ENCODE measurements at regions of chr22 and their contacts with region 1.

Region 1: GRCh38 chr22:28800308-28801077 is at the start of gene XBP1:
- DNase-seq: peak; percentile 92 to 96
- H3K4me3 ChIP-seq: peak within 1 kb of the TSS; percentile 94
- H3K4me3 Mint-ChIP-seq: peak within 1 kb of the TSS; percentile 93
- H3K27ac Mint-ChIP-seq: peak within 1 kb of the TSS; percentile 99
- H3K4me1 ChIP-seq: peaks cover 17% of the 10 kb centered on the region
- H3K4me1 Mint-ChIP-seq: peaks cover 19% of the 10 kb centered on the region
- H3K27me3 ChIP-seq: no peaks in the 10 kb centered on the region
- H3K27me3 Mint-ChIP-seq: no peaks in the 10 kb centered on the region
- CTCF ChIP-seq: no peak
- total RNA-seq, gene XBP1: 215 and 225 TPM in 2 replicates

Region 2: DNA sequence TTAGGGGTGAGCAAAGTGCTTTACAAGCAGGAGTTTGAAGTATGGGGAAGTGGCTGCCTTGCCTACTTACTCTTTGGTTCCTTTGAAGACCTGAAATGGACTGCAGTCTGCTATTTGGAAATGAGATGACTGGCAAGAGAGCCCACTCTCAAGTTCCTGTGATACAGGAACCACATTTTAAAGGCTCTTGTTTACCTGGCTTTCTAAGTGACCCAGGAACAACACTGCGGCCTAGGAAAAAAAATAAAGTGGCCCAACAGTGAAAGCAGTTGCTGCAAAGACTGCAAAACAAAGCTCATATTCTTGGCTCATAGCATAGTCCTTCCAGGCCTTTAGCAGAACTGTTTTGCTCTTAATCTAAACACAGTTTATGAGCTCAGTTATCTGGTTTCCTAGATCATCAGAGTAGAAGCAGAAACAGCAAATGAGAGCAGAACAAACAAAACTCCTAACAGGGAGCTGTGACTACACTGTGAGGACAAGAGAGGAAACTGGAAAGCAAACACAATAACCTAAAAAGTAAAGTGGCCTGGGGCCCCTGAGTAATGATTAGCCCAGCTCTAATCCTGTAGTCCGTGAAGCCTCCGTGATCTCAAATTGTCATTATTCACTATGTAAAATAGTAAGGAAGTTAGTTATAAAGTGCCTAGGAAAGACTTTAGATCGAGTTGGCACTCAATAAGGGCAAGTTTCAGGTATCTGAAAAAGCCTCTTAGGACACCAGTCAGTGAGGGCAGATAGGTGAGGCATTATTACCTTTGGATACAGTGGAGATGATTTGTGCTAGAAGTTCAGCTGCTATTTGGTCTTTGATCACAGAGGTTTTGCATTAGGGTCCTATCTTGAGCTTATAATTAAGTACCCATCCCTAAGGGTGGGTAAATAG is 16.5 kb before region 1 on chr22:
- CTCF ChIA-PET with region 1: interaction called, 3 read pairs
- POLR2A ChIA-PET with region 1: interaction called, 43 read pairs
- intact Hi-C with region 1: loop called (anchors 1 kb)
- DNase-seq: peak; percentile 67 to 79
- H3K4me3 ChIP-seq: no peak overlapping the region
- H3K4me3 Mint-ChIP-seq: peak overlapping the region; percentile 45
- H3K27ac Mint-ChIP-seq: peak overlapping the region; percentile 76
- H3K4me1 ChIP-seq: peaks cover 28% of the 10 kb centered on the region
- H3K4me1 Mint-ChIP-seq: peaks cover 26% of the 10 kb centered on the region
- H3K27me3 ChIP-seq: no peaks in the 10 kb centered on the region
- H3K27me3 Mint-ChIP-seq: no peaks in the 10 kb centered on the region
- CTCF ChIP-seq: no peak

Region 3: GRCh38 chr22:28810821-28811491 is 10.5 kb after region 1 on chr22:
- CTCF ChIA-PET with region 1: interaction called, 7 read pairs
- POLR2A ChIA-PET with region 1: interaction called, 35 read pairs
- intact Hi-C with region 1: no loop called
- DNase-seq: peak in 1 of 2 experiments; percentile 30
- H3K4me3 ChIP-seq: no peak overlapping the region
- H3K4me3 Mint-ChIP-seq: no peak overlapping the region
- H3K27ac Mint-ChIP-seq: peak overlapping the region; percentile 12
- H3K4me1 ChIP-seq: peaks cover 78% of the 10 kb centered on the region
- H3K4me1 Mint-ChIP-seq: peaks cover 33% of the 10 kb centered on the region
- H3K27me3 ChIP-seq: no peaks in the 10 kb centered on the region
- H3K27me3 Mint-ChIP-seq: no peaks in the 10 kb centered on the region
- CTCF ChIP-seq: no peak

Region 4: DNA sequence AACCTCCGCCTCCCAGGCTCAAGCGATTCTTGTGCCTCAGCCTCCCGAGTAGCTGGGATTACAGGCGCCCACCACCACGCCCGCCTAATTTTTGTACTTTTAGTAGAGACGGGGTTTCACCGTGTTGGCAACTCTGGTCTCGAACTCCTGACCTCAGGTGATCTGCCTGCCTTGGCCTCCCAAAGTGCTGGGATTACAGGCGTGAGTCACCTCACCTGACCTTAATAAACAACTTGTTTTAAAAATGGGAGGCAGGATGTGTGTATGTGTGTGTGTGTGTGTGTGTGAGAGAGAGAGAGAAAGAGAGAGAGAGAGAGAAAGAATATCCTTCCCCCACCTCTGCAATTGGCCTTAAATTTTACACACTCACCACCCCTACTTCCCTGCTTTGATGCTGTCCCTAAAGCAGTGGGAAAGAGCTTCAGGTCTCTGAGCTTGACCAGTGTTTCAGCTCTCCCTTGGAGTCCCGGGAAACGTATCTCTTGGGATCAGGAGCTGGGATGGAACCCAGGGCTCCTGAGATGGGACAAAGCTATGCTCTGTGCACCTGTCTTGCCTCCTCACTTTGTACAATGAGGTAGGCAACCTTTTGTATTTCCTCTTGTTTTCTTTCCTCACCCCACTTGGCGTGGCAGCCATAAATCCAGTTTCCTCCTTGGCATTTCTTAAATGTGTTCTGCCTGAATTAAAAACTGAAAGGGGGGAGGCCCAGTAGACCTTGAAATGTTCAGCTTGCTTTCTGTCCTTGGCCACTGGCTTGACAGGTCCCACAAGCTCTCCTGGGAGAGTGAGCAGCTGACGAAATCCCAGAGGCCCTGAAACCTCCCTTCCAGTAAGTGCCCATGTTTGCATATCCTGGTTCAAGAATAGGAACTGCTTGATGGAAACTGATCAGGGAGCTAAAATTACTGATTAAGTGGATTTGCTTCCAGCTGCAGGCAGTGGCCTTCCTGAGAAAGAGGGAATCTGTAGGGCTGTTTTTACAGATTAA is 17.7 kb after region 1 on chr22:
- CTCF ChIA-PET with region 1: interaction called, 5 read pairs
- POLR2A ChIA-PET with region 1: interaction called, 42 read pairs
- intact Hi-C with region 1: loop called (anchors 1 kb)
- DNase-seq: peak; percentile 84 to 86
- H3K4me3 ChIP-seq: no peak overlapping the region
- H3K4me3 Mint-ChIP-seq: peak overlapping the region; percentile 59
- H3K27ac Mint-ChIP-seq: peak overlapping the region; percentile 99
- H3K4me1 ChIP-seq: peaks cover 88% of the 10 kb centered on the region
- H3K4me1 Mint-ChIP-seq: peaks cover 65% of the 10 kb centered on the region
- H3K27me3 ChIP-seq: no peaks in the 10 kb centered on the region
- H3K27me3 Mint-ChIP-seq: no peaks in the 10 kb centered on the region
- CTCF ChIP-seq: no peak